ENCODE measurements at regions of chr3 and their contacts with region 1.

Region 1: GRCh38 chr3:170098753-170099152 is 61.0 kb downstream of the GPR160 start:
- DNase-seq: no peak
- H3K4me3 ChIP-seq: no peak overlapping the region
- CTCF ChIP-seq: no peak

Region 2: DNA sequence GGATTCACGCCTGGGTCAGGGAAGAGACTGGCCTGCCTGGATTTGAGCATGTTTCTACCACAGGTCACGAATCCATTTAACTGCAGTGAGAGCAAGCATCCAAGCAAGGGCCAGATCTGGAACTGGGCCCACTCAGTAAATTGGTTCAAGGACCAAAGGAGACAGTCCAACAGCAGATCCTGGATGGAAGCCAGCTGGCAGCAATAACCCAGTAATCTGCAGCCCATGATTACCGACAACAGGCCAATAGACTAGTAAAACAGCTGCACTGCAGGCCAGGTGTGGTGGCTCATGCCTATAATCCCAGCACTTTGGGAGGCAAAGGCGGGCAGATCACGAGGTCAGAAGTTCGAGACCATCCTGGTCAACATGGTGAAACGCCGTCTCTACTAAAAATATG is 175.6 kb before region 1 on chr3:
- CTCF ChIA-PET with region 1: no interaction called
- POLR2A ChIA-PET with region 1: no interaction called
- DNase-seq: no peak
- H3K4me3 ChIP-seq: no peak overlapping the region
- CTCF ChIP-seq: no peak

Region 3: GRCh38 chr3:169954142-169954756 is 144.5 kb before region 1 on chr3:
- CTCF ChIA-PET with region 1: no interaction called
- POLR2A ChIA-PET with region 1: no interaction called
- DNase-seq: no peak
- H3K4me3 ChIP-seq: no peak overlapping the region
- CTCF ChIP-seq: no peak

Region 4: DNA sequence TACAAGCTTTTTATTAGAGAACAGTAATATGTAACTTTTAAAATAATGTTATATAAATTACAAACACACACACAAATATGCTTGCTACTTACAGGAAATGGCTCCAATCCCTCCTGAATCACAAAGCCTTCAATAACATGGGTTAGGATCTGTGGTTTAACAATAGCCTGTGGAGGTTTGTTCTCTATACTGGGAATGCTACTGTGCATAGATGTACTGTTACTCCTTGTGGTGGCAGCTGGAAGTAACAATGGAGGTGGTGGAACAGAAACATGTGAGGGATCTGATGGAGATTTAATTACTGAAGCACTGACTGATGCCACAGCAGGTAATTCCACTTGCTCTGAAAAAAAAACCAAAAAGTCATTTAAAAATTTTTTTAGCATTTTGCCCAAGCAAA is 18.4 kb after region 1 on chr3:
- CTCF ChIA-PET with region 1: interaction called, 10 read pairs
- POLR2A ChIA-PET with region 1: no interaction called
- DNase-seq: no peak
- H3K4me3 ChIP-seq: no peak overlapping the region
- CTCF ChIP-seq: peak; percentile 9

Region 5: DNA sequence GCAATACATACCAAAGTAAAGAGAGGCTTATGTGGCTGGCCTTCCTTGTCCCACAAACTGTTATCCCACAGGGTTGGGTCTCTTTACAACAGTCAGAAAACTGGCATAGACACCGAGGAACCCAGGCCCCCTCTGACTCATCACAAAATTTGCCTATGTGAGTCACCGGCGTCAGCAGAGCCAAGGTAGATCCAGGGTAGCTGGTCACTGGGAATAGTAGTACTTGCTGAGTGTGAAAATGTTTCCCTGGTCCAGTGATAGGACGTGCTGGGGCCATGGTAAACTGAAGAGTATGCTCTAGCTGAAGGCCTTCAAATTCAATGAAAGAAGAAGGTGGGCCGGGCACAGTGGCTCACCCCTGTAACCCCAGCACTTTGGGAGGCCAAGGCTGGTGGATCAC is 231.6 kb after region 1 on chr3:
- CTCF ChIA-PET with region 1: no interaction called
- POLR2A ChIA-PET with region 1: no interaction called
- DNase-seq: no peak
- H3K4me3 ChIP-seq: no peak overlapping the region
- CTCF ChIP-seq: no peak

Measured in AG04449 (cell line).